ENCODE measurements at regions of chr1 and their contacts with region 1.

Region 1: DNA sequence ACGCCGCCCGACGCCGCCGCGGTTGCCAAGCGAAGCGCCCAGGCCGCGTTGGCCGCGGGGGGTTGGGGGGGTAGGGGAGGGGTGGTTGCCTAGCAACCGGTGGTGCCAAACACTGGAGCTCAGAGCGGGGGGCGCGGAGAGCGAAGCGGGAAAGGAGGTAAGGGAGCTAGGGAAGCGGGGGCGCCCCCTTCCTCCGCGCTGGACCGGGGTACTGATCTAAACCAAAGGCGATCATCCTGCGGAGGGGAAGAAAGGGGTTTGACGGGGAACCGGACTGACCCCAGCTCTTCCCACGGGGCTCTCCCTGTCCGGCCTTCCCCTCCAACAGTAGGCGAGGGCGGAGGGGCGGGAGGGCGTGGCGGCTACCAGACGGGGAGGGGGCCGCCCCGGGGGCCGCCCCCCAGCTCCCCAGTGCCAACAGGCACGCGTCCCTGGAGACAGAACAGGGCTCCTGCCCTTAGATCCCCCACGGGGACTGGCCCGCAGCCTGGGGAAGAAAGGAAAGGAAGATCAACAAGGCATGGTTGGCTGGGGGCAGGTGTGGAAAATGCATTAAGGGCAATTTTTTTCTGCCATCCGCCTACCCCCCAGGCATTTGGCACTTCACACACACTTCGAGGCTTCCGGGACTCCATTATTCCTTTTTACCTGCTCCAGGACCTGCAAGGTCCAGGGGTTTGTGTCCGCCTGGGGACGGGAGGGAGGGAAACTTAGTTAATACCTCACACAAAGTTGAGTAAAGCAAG is at the start of gene TEKT2:
- DNase-seq: no peak
- H3K4me3 ChIP-seq: peak within 1 kb of the TSS; percentile 49 to 55
- H3K27ac ChIP-seq: no peak within 1 kb of the TSS
- H3K4me1 ChIP-seq: peaks cover 20% of the 10 kb centered on the region
- H3K27me3 ChIP-seq: no peaks in the 10 kb centered on the region
- CTCF ChIP-seq: no peak
- POLR2A ChIP-seq: no peak
- total RNA-seq, gene TEKT2: not detected

Region 2: DNA sequence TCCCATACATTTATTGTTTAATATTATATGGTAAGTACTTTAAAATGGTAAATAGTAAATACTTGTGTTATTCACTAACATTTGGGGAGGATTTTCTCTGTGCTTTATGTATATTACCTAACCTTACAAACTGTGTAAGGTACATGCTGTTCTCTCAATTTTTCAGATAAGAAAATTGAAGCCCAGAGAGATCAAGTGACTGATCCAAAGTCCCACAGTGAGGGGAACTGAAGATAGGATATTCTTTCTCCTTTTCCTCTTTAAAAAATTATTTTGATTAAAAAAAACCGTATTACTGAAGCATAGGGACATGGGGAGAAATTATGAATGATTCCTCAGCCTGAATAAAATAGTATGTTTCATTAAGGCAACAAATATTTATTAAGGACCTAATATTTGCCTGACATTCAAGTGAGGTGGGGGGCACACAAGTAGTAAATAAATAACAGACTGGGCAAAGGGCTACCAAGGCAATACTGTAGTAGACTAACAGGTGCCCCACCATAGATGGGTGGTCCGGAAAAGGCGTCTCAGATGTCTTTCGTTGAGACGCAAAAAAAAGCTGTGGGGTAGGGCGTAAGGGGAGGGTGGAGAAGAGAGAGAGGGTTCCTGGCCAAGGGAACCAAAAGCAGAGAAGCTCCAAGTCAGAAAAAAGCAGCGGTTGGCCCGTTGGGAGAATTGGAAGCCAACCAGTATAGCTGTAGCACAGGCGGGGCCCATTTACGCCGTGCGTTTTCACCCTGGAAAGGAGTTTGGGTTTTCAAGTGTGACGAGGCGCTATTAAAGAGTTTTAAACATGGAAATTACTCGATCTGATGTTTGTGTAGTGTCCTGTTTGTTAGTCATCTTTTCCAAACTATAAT is 154.2 kb before region 1 on chr1:
- intact Hi-C with region 1: loop called (anchors 5 kb)
- DNase-seq: no peak
- H3K4me3 ChIP-seq: peak overlapping the region; percentile 79 to 92
- H3K27ac ChIP-seq: peak overlapping the region; percentile 99
- H3K4me1 ChIP-seq: peaks cover 28% of the 10 kb centered on the region
- H3K27me3 ChIP-seq: no peaks in the 10 kb centered on the region
- CTCF ChIP-seq: no peak
- POLR2A ChIP-seq: no peak